ENCODE measurements at regions of chr21 and their contacts with region 1.

Region 1: GRCh38 chr21:36156339-36156814 is 247 bp upstream of the DOP1B start:
- DNase-seq: peak; percentile 98 to 99
- H3K4me3 ChIP-seq: peak overlapping the region; percentile 89
- H3K4me3 Mint-ChIP-seq: peak overlapping the region; percentile 83
- H3K27ac Mint-ChIP-seq: peak overlapping the region; percentile 84
- H3K4me1 ChIP-seq: peaks cover 5% of the 10 kb centered on the region
- H3K4me1 Mint-ChIP-seq: peaks cover 20% of the 10 kb centered on the region
- H3K27me3 ChIP-seq: no peaks in the 10 kb centered on the region
- H3K27me3 Mint-ChIP-seq: no peaks in the 10 kb centered on the region
- CTCF ChIP-seq: no peak

Region 2: GRCh38 chr21:36113647-36114428 is 42.5 kb before region 1 on chr21:
- CTCF ChIA-PET with region 1: no interaction called
- POLR2A ChIA-PET with region 1: no interaction called
- intact Hi-C with region 1: no loop called
- DNase-seq: peak; percentile 56 to 80
- H3K4me3 ChIP-seq: peak overlapping the region; percentile 41
- H3K4me3 Mint-ChIP-seq: peak overlapping the region; percentile 76
- H3K27ac Mint-ChIP-seq: peak overlapping the region; percentile 85
- H3K4me1 ChIP-seq: peaks cover 8% of the 10 kb centered on the region
- H3K4me1 Mint-ChIP-seq: peaks cover 14% of the 10 kb centered on the region
- H3K27me3 ChIP-seq: no peaks in the 10 kb centered on the region
- H3K27me3 Mint-ChIP-seq: no peaks in the 10 kb centered on the region
- CTCF ChIP-seq: no peak

Region 3: DNA sequence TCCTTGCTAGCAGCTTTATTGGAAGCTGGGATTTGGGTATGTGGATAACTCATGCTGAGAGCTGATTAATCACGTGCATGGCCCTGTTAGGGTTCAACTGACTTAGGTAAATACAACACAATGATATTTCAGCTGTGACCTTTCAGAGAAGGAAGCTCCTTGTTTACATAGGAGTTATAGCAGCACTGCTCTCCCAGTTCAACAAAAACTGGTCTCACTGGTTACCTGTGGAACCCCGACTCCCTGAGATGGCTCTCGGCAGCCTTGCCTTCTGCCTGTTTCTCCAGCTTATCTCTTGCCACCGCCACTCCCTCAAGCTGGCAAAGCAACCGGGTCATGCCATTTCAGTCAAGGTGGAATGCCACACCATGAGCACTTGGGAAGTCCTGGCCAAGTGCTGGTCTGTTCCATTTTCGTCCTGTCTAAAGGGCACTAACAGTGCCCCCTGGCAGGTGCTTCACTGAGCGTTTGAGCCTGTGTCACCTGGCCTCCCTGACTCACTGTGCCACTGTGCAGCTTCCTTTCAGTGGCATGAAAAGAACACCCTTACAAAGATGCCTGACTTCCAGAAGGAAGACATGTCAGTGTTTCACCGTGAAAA is 31.8 kb after region 1 on chr21:
- CTCF ChIA-PET with region 1: interaction called, 3 read pairs
- POLR2A ChIA-PET with region 1: interaction called, 5 read pairs
- intact Hi-C with region 1: loop called (anchors 1 kb)
- DNase-seq: peak; percentile 79 to 82
- H3K4me3 ChIP-seq: peak overlapping the region; percentile 15; the same call in 1 of the 2 replicates
- H3K4me3 Mint-ChIP-seq: peak overlapping the region; percentile 68
- H3K27ac Mint-ChIP-seq: peak overlapping the region; percentile 79
- H3K4me1 ChIP-seq: peaks cover 40% of the 10 kb centered on the region
- H3K4me1 Mint-ChIP-seq: peaks cover 41% of the 10 kb centered on the region
- H3K27me3 ChIP-seq: no peaks in the 10 kb centered on the region
- H3K27me3 Mint-ChIP-seq: no peaks in the 10 kb centered on the region
- CTCF ChIP-seq: peak in 1 of 2 experiments; percentile 18

Region 4: DNA sequence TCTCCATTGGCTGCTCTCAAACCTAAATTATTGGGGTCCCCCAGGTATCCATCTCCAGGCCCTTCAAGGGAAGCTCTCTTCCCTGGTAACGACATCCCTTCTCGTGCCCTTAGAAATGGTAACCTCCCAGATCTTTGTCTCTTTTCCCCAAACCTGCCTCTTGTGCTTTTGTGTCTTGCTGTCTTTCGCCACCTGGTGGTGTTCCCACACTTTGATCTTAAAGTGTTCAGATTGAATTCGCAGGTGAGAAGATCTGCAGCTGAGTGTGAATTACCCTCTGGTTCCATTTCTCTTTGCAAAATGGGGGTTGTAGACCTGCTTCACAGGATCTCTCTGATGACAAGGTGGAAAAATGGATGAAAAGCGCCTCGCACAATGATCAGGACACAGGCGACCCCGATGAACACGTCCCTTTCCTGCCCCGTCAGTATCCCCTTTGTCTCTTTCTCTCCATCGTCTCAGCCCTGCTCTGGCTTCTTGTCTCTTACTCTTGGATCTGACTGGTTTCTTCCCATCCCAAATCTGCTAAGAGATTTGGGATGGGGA is 53.3 kb after region 1 on chr21:
- CTCF ChIA-PET with region 1: interaction called, 13 read pairs
- POLR2A ChIA-PET with region 1: interaction called, 6 read pairs
- intact Hi-C with region 1: loop called (anchors 1 kb)
- DNase-seq: peak; percentile 74 to 76
- H3K4me3 ChIP-seq: no peak overlapping the region
- H3K4me3 Mint-ChIP-seq: peak overlapping the region; percentile 32
- H3K27ac Mint-ChIP-seq: peak overlapping the region; percentile 81
- H3K4me1 ChIP-seq: peaks cover 16% of the 10 kb centered on the region
- H3K4me1 Mint-ChIP-seq: peaks cover 25% of the 10 kb centered on the region
- H3K27me3 ChIP-seq: no peaks in the 10 kb centered on the region
- H3K27me3 Mint-ChIP-seq: no peaks in the 10 kb centered on the region
- CTCF ChIP-seq: peak; percentile 74 to 79

Region 5: DNA sequence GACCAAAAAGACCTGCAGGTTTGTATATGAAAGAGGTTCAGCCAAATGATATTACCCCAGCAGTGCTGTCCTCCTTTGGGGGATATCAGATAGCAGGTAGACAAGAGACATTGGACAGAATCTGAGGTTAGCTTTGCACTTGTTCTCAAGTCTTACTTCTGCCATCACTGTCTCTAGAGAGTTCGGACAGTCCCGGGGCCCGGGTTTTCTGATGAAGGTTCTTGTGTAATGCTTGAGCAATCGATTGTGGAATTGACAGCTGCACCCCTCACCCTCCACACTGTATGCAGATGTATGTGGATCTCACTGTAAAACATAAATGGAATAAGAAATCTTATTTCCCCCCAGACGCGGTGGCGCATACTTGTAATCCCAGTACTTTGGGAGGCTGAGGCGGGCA is 107.4 kb after region 1 on chr21:
- CTCF ChIA-PET with region 1: no interaction called
- POLR2A ChIA-PET with region 1: no interaction called
- intact Hi-C with region 1: loop called (anchors 5 kb)
- DNase-seq: no peak
- H3K4me3 ChIP-seq: no peak overlapping the region
- H3K4me3 Mint-ChIP-seq: no peak overlapping the region
- H3K27ac Mint-ChIP-seq: no peak overlapping the region
- H3K4me1 ChIP-seq: peaks cover 28% of the 10 kb centered on the region
- H3K4me1 Mint-ChIP-seq: peaks cover 7% of the 10 kb centered on the region
- H3K27me3 ChIP-seq: no peaks in the 10 kb centered on the region
- H3K27me3 Mint-ChIP-seq: no peaks in the 10 kb centered on the region
- CTCF ChIP-seq: no peak